ENCODE measurements at regions of chr2 and their contacts with region 1.

Region 1: DNA sequence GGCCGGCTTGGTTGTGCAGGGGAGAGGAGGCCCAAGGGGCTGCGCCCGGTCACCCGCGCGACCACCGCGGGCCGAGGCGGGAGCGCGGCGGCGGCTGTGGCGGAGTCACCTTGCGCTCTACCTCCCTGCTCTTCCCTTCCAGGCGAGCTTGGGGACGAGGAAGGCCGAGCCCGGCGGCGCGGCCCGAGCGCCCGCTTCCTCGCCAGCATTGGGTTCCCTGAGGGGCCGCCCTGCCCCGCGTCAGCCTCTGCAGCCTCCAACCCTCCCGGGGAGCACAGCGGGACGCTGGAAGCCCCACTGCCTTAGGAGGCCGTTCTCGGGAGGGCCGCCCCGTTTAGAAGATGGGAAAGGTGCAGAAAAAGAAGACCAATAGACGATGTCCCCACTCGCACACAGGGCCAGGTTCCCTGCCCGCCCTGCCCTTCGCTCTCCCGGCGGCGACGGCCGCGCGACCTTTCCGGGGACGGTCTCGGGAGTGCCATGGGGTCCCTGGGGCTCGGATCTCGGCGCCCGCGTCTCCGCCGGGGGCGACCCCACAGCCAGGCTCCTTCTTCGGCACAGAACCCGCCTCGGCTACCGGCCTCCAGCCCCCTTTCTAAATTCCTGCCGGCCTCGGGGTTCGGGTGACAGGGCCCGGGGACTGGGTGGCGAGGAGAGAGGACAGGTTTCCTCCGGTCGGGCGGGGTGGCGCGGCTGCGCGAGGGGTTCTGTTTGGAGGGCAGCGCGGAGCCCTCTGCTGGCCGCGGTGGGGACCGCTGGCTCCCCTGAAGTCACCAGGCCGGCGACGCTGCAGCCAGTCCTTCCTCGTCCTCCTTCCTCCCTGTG is 85.5 kb downstream of the HS6ST1 start:
- DNase-seq: peak; percentile 73 to 100 (median 90)
- ATAC-seq: peak; percentile 99
- H3K4me3 ChIP-seq: peak overlapping the region; percentile 67 to 75
- H3K27ac ChIP-seq: peak overlapping the region; percentile 21 to 45
- H3K4me1 ChIP-seq: peaks cover 0 to 12% of the 10 kb centered on the region in 2 donors
- H3K27me3 ChIP-seq: peaks cover 5 to 36% of the 10 kb centered on the region in 2 donors
- CTCF ChIP-seq: peak; percentile 83 to 92

Region 2: GRCh38 chr2:128178650-128179460 is 54.3 kb before region 1 on chr2:
- intact Hi-C with region 1: loop called in 1 of 2 experiments (anchors 10 kb)
- DNase-seq: peak in 2 of 4 donors; percentile 61 to 86
- ATAC-seq: peak; percentile 80
- H3K4me3 ChIP-seq: no peak overlapping the region
- H3K27ac ChIP-seq: peak overlapping the region in 1 of 2 donors; percentile 25
- H3K4me1 ChIP-seq: peaks cover 0 to 11% of the 10 kb centered on the region in 2 donors
- H3K27me3 ChIP-seq: no peaks in the 10 kb centered on the region
- CTCF ChIP-seq: peak; percentile 51 to 61

Measured in left lung (tissue), 14 donors.